B cell (primary cell): ENCODE measurements at regions of chr18 and their contacts with region 1.

Region 1: DNA sequence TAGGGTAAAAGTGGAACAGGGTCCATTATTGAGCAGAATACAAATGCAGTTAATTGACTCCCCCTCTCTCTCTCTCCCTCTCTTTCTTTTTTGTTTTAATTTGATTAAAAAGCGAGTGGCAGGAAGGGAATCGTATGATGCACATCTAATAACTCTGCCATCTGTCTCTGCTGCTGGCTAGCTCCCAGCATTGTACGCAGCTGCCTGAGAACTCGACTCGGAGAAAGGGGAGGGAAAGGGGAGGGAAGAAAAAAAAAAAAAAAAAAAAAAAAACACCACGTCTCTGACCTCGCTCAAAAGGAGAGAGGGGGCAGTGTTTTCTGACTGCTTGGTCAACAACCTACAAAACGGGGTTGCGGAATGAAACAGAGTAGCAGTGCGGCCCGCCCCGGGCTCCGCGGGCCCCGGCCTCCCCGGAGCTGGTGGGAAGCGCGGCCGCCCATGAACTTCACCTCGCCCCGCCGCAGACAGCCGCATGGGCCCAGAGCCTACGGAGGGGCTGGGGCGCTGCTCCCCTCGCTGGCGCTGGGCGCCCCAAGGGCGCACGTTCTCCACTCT is 265.7 kb downstream of the TCF4 start:
- DNase-seq: peak; percentile 83
- ATAC-seq: peak; percentile 63
- H3K4me3 ChIP-seq: peak overlapping the region; percentile 79 to 97 (median 84)
- H3K4me3 Mint-ChIP-seq: peak overlapping the region; percentile 96
- H3K27ac ChIP-seq: peak overlapping the region; percentile 85 to 93
- H3K27ac Mint-ChIP-seq: peak overlapping the region; percentile 92
- H3K4me1 ChIP-seq: peaks cover 36 to 59% of the 10 kb centered on the region in 2 donors
- H3K4me1 Mint-ChIP-seq: peaks cover 62% of the 10 kb centered on the region
- H3K27me3 ChIP-seq: no peaks in the 10 kb centered on the region
- H3K27me3 Mint-ChIP-seq: no peaks in the 10 kb centered on the region
- CTCF ChIP-seq: no peak

Region 2: DNA sequence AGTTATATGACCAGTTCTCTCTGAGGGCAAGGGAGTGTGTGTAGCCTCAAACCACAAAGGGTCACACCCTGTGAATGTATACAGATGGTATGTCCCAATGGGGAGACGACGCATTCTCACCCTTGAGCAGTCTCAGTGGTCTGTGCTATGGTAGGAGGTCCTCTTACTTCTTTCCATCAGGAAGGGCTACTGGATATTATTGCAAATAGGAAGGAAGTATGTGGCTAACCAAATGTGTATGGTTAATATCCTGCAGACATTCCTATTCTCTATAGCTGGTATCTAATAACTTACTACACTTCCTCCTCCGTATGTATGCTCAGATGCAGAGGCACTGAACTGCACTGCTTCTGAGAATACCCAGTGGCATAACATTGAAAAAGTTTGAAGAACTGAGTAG is 56.3 kb before region 1 on chr18:
- CTCF ChIA-PET with region 1: interaction called, 5 read pairs
- POLR2A ChIA-PET with region 1: interaction called, 11 read pairs
- intact Hi-C with region 1: loop called (anchors 1 kb)
- DNase-seq: peak; percentile 58
- ATAC-seq: peak; percentile 31
- H3K4me3 ChIP-seq: peak overlapping the region in 2 of 5 experiments; percentile 8 to 26
- H3K4me3 Mint-ChIP-seq: peak overlapping the region; percentile 69
- H3K27ac ChIP-seq: peak overlapping the region; percentile 84 to 94
- H3K27ac Mint-ChIP-seq: peak overlapping the region; percentile 91
- H3K4me1 ChIP-seq: peaks cover 59 to 63% of the 10 kb centered on the region in 2 donors
- H3K4me1 Mint-ChIP-seq: peaks cover 69% of the 10 kb centered on the region
- H3K27me3 ChIP-seq: no peaks in the 10 kb centered on the region
- H3K27me3 Mint-ChIP-seq: no peaks in the 10 kb centered on the region
- CTCF ChIP-seq: no peak

Region 3: GRCh38 chr18:55337908-55338521 is 15.8 kb after region 1 on chr18:
- CTCF ChIA-PET with region 1: interaction called, 11 read pairs
- POLR2A ChIA-PET with region 1: interaction called, 6 read pairs
- intact Hi-C with region 1: loop called (anchors 2 kb)
- DNase-seq: peak; percentile 66
- ATAC-seq: peak; percentile 76
- H3K4me3 ChIP-seq: peak overlapping the region in 3 of 5 experiments; percentile 8 to 56 (median 24)
- H3K4me3 Mint-ChIP-seq: peak overlapping the region; percentile 87
- H3K27ac ChIP-seq: peak overlapping the region; percentile 56 to 84
- H3K27ac Mint-ChIP-seq: peak overlapping the region; percentile 88
- H3K4me1 ChIP-seq: peaks cover 23 to 27% of the 10 kb centered on the region in 2 donors
- H3K4me1 Mint-ChIP-seq: peaks cover 35% of the 10 kb centered on the region
- H3K27me3 ChIP-seq: no peaks in the 10 kb centered on the region
- H3K27me3 Mint-ChIP-seq: no peaks in the 10 kb centered on the region
- CTCF ChIP-seq: no peak

Region 4: DNA sequence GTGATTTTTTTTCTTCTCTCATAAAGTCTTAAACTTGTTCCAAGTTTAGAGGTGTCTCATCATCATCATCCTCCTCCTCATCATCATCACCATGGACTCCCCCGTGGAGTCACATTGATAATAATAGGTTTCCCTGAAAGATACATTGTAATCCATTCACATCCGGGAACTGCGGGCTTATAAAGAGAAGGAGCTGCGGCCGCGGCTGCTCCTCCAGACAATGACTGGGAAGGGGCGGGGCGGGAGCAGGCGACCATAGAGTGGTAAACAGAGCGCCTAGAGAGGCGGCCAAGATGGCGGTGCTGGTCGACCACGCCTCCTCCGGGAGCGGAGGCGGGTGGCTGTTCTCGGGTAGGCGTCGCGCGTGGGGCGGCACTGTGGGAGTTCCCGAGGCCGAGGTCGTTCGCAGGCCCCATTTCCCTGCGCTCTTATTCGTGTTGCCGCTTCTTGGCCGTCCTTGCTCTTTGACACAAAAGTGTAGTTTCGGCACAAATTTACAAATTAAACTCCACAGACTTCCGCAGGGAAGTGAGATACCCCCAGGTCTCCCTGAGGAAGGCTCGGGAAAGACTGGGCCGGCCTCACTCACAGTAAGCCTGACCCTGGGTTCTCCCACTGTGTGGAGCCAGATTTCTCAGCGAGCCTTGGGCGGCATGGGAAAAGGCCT is 267.5 kb after region 1 on chr18:
- CTCF ChIA-PET with region 1: no interaction called
- POLR2A ChIA-PET with region 1: no interaction called
- intact Hi-C with region 1: loop called (anchors 2 kb)
- DNase-seq: peak; percentile 95
- ATAC-seq: peak; percentile 87
- H3K4me3 ChIP-seq: peak overlapping the region; percentile 62 to 90 (median 71)
- H3K4me3 Mint-ChIP-seq: peak overlapping the region; percentile 89
- H3K27ac ChIP-seq: peak overlapping the region; percentile 77 to 82
- H3K27ac Mint-ChIP-seq: peak overlapping the region; percentile 92
- H3K4me1 ChIP-seq: peaks cover 20 to 21% of the 10 kb centered on the region in 2 donors
- H3K4me1 Mint-ChIP-seq: peaks cover 37% of the 10 kb centered on the region
- H3K27me3 ChIP-seq: peaks cover 0 to 6% (median 2%) of the 10 kb centered on the region in 4 experiments
- H3K27me3 Mint-ChIP-seq: peaks cover 15% of the 10 kb centered on the region
- CTCF ChIP-seq: no peak

Region 5: GRCh38 chr18:56638271-56639093 is 1316.2 kb after region 1 on chr18 and contains the start of gene TXNL1:
- CTCF ChIA-PET with region 1: no interaction called
- POLR2A ChIA-PET with region 1: interaction called, 10 read pairs
- intact Hi-C with region 1: loop called (anchors 2 kb)
- DNase-seq: peak; percentile 98
- ATAC-seq: peak; percentile 97
- H3K4me3 ChIP-seq: peak within 1 kb of the TSS; percentile 72 to 97 (median 89)
- H3K4me3 Mint-ChIP-seq: peak within 1 kb of the TSS; percentile 93
- H3K27ac ChIP-seq: peak within 1 kb of the TSS; percentile 92 to 94
- H3K27ac Mint-ChIP-seq: peak within 1 kb of the TSS; percentile 95
- H3K4me1 ChIP-seq: peaks cover 15 to 23% of the 10 kb centered on the region in 2 donors
- H3K4me1 Mint-ChIP-seq: peaks cover 46% of the 10 kb centered on the region
- H3K27me3 ChIP-seq: no peaks in the 10 kb centered on the region
- H3K27me3 Mint-ChIP-seq: no peaks in the 10 kb centered on the region
- CTCF ChIP-seq: no peak
- total RNA-seq, gene TXNL1: 39.8 and 45.4 TPM in 2 replicates